Sigmoid colon (tissue), 7 donors: ENCODE measurements at regions of chr11 and their contacts with region 1.

Region 1: GRCh38 chr11:44538375-44539054 is 26.9 kb upstream of the CD82 start:
- DNase-seq: peak; percentile 86
- H3K4me3 ChIP-seq: no peak overlapping the region
- H3K27ac ChIP-seq: no peak overlapping the region
- H3K4me1 ChIP-seq: no peaks in the 10 kb centered on the region
- H3K27me3 ChIP-seq: peaks cover 0 to 3% (median 0%) of the 10 kb centered on the region in 3 donors
- CTCF ChIP-seq: peak; percentile 85 to 97 (median 94)
- EP300 ChIP-seq: no peak
- POLR2A ChIP-seq: no peak

Region 2: DNA sequence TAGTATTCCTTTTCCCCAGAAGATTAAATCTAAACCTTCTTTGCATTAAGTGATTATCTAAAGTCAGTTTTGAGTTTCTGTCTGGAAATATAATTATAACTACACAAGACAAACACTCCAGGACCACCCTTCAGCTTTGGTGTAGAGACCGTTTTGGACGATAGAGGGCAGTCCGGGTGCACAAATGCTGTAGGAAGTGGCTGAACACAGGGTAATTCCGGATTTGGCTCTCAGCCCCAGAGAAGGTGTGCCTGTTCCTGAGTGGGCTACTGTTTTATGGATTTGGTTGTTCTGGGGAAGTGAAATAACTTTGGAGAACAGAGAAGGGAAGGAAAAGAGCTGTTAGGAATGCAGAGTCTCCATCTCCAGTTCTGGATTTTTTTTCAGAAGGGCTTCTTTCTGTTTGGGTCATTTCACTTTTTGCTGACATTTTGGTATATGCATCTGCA is 428.3 kb before region 1 on chr11:
- intact Hi-C with region 1: loop called (anchors 5 kb)
- DNase-seq: no peak
- H3K4me3 ChIP-seq: no peak overlapping the region
- H3K27ac ChIP-seq: no peak overlapping the region
- H3K4me1 ChIP-seq: peaks cover 0 to 16% (median 11%) of the 10 kb centered on the region in 4 donors
- H3K27me3 ChIP-seq: no peaks in the 10 kb centered on the region
- CTCF ChIP-seq: peak in 3 of 4 experiments; percentile 52 to 60 (median 55)
- EP300 ChIP-seq: no peak
- POLR2A ChIP-seq: no peak

Region 3: GRCh38 chr11:44286268-44286880 is 252.1 kb before region 1 on chr11:
- intact Hi-C with region 1: loop called (anchors 1 kb)
- DNase-seq: no peak
- H3K4me3 ChIP-seq: no peak overlapping the region
- H3K27ac ChIP-seq: no peak overlapping the region
- H3K4me1 ChIP-seq: peaks cover 0 to 4% (median 0%) of the 10 kb centered on the region in 4 donors
- H3K27me3 ChIP-seq: peaks cover 0 to 5% (median 0%) of the 10 kb centered on the region in 3 donors
- CTCF ChIP-seq: peak; percentile 61 to 95 (median 92)
- EP300 ChIP-seq: no peak
- POLR2A ChIP-seq: no peak